ENCODE measurements at regions of chr13 and their contacts with region 1.

Region 1: GRCh38 chr13:42039946-42040729 is 8.3 kb upstream of the DGKH start:
- DNase-seq: peak; percentile 86
- ATAC-seq: peak; percentile 87
- H3K4me3 ChIP-seq: peak overlapping the region; percentile 95
- H3K27ac ChIP-seq: peak overlapping the region; percentile 71
- H3K4me1 ChIP-seq: peaks cover 8% of the 10 kb centered on the region
- H3K27me3 ChIP-seq: no peaks in the 10 kb centered on the region
- CTCF ChIP-seq: 0 out of 2 replicates have a peak, but pooled peaks have one; percentile 10
- POLR2A ChIP-seq: peak; percentile 96
- RAD21 ChIP-seq: no peak

Region 2: GRCh38 chr13:41411522-41411921 is 628.6 kb before region 1 on chr13:
- CTCF ChIA-PET with region 1: no interaction called
- POLR2A ChIA-PET with region 1: no interaction called
- dilution Hi-C with region 1: no loop called
- in situ Hi-C with region 1: no loop called
- intact Hi-C with region 1: loop called (anchors 5 kb)
- DNase-seq: peak; percentile 71
- ATAC-seq: peak; percentile 98
- H3K4me3 ChIP-seq: no peak overlapping the region
- H3K27ac ChIP-seq: no peak overlapping the region
- H3K4me1 ChIP-seq: no peaks in the 10 kb centered on the region
- H3K27me3 ChIP-seq: no peaks in the 10 kb centered on the region
- CTCF ChIP-seq: peak; percentile 67
- POLR2A ChIP-seq: no peak
- RAD21 ChIP-seq: peak; percentile 78

Region 3: DNA sequence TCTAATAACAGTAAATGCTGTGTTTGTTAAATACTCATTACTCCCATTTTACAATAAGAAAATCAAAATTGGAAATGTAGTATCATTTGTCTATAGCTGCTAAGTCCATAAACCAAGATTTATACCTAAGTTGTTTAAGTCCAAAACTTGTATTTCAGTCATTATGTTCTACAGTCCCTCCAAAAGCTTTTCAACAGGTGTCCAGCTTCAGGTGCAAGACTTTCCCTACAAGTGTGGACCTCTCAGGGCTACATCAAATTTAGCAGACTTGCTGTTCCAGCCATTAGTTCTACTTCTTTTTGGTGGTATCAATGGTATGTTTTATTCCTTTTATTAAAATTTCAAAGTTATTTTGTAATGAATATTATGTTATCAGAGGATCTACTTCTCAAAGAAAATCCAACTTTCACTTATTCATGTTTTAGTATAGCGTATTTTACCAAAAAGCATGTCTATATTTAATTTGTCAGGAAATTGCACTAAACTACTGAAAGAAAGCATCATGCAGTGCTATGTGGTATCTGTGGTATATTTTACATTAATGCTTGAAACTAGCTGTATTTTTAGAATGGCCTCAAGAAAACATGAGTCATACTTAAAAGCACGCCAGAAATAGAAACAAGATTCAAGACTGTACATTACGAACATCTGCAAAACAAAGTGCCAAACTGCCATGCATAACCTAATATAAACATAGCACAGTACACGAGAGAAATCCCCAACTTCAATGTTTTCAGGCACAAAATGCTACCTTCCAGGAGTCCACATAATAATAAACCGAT is 123.8 kb before region 1 on chr13:
- CTCF ChIA-PET with region 1: no interaction called
- POLR2A ChIA-PET with region 1: no interaction called
- dilution Hi-C with region 1: no loop called
- in situ Hi-C with region 1: no loop called
- intact Hi-C with region 1: loop called (anchors 5 kb)
- DNase-seq: peak; percentile 95
- ATAC-seq: peak; percentile 83
- H3K4me3 ChIP-seq: no peak overlapping the region
- H3K27ac ChIP-seq: no peak overlapping the region
- H3K4me1 ChIP-seq: peaks cover 11% of the 10 kb centered on the region
- H3K27me3 ChIP-seq: no peaks in the 10 kb centered on the region
- CTCF ChIP-seq: no peak
- POLR2A ChIP-seq: no peak
- RAD21 ChIP-seq: 0 out of 2 replicates have a peak, but pooled peaks have one; percentile 17

Region 4: GRCh38 chr13:42001580-42001979 is 38.6 kb before region 1 on chr13:
- CTCF ChIA-PET with region 1: no interaction called
- POLR2A ChIA-PET with region 1: no interaction called
- dilution Hi-C with region 1: no loop called
- in situ Hi-C with region 1: no loop called
- intact Hi-C with region 1: loop called (anchors 2 kb)
- DNase-seq: peak; percentile 93
- ATAC-seq: peak; percentile 99
- H3K4me3 ChIP-seq: no peak overlapping the region
- H3K27ac ChIP-seq: peak overlapping the region; percentile 34
- H3K4me1 ChIP-seq: 0 out of 2 replicates have a peak, but pooled peaks cover 4% of the 10 kb centered on the region
- H3K27me3 ChIP-seq: no peaks in the 10 kb centered on the region
- CTCF ChIP-seq: no peak
- POLR2A ChIP-seq: no peak
- RAD21 ChIP-seq: no peak

Region 5: DNA sequence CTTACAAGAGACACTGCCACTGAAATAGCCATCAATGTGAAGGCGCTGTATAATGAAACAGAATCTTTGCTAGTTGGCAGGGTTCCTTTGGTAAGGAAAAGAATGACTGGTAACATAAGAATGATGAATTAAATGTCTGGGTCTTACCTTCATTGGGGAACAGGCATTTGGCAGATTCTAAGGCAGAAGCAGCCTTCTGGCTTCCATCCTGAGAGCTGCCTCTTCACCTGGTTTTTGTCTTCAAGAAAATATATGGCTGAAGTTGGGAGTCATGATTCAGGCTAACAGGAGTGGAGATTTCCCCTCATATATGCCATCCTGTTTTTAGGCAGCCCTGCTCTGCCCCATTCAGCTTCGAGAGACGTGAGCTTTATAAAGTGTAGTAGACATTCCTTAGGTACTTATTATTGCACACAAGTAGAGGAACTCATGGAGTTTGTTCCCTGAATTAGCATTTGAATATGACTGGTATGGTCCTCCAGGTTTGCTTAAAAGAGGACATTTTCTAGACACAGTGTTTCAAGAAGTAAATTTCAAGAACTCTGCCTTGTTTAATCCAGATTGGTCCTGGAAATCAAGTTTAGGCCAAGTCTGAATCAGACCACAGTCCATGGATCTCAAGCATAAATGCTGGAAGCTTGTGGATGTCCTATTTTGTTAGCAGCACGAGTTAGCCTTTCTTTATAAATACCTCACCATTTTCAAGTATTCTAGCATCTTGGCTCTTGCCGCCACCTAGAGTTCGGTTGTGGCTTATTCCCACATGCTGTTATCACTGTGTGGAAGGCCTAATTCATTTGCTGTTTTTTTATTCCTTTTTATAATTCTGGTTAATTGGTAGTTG is 175.7 kb after region 1 on chr13:
- CTCF ChIA-PET with region 1: no interaction called
- POLR2A ChIA-PET with region 1: no interaction called
- dilution Hi-C with region 1: no loop called
- in situ Hi-C with region 1: no loop called
- intact Hi-C with region 1: loop called (anchors 10 kb)
- DNase-seq: peak; percentile 60
- ATAC-seq: peak; percentile 91
- H3K4me3 ChIP-seq: no peak overlapping the region
- H3K27ac ChIP-seq: no peak overlapping the region
- H3K4me1 ChIP-seq: no peaks in the 10 kb centered on the region
- H3K27me3 ChIP-seq: no peaks in the 10 kb centered on the region
- CTCF ChIP-seq: peak; percentile 64
- POLR2A ChIP-seq: no peak
- RAD21 ChIP-seq: peak; percentile 61

Measured in IMR-90 (cell line).